Naive thymus-derived CD8-positive, alpha-beta T cell (primary cell): ENCODE measurements at regions of chr1 and their contacts with region 1.

Region 1: GRCh38 chr1:147242439-147243227 is at the start of gene CHD1L:
- DNase-seq: peak; percentile 87 to 95 (median 93)
- ATAC-seq: peak; percentile 88 to 90
- H3K4me3 Mint-ChIP-seq: peak within 1 kb of the TSS; percentile 91 to 99 (median 95)
- H3K27ac Mint-ChIP-seq: peak within 1 kb of the TSS; percentile 61 to 95 (median 86)
- H3K4me1 Mint-ChIP-seq: peaks cover 21 to 44% (median 38%) of the 10 kb centered on the region in 4 donors
- H3K27me3 Mint-ChIP-seq: peaks cover 0 to 5% (median 3%) of the 10 kb centered on the region in 5 donors
- polyA plus RNA-seq, gene CHD1L: 17.6 to 25.5 (median 21.9) TPM

Region 2: GRCh38 chr1:147084273-147085096 is 158.1 kb before region 1 on chr1:
- POLR2A ChIA-PET with region 1: interaction called, 10 read pairs
- DNase-seq: peak; percentile 27 to 81 (median 62)
- ATAC-seq: peak; percentile 75 to 81
- H3K4me3 Mint-ChIP-seq: peak overlapping the region; percentile 86 to 99 (median 95)
- H3K27ac Mint-ChIP-seq: peak overlapping the region; percentile 91 to 100 (median 96)
- H3K4me1 Mint-ChIP-seq: peaks cover 19 to 39% (median 31%) of the 10 kb centered on the region in 4 donors
- H3K27me3 Mint-ChIP-seq: peaks cover 13 to 71% (median 53%) of the 10 kb centered on the region in 5 donors

Region 3: DNA sequence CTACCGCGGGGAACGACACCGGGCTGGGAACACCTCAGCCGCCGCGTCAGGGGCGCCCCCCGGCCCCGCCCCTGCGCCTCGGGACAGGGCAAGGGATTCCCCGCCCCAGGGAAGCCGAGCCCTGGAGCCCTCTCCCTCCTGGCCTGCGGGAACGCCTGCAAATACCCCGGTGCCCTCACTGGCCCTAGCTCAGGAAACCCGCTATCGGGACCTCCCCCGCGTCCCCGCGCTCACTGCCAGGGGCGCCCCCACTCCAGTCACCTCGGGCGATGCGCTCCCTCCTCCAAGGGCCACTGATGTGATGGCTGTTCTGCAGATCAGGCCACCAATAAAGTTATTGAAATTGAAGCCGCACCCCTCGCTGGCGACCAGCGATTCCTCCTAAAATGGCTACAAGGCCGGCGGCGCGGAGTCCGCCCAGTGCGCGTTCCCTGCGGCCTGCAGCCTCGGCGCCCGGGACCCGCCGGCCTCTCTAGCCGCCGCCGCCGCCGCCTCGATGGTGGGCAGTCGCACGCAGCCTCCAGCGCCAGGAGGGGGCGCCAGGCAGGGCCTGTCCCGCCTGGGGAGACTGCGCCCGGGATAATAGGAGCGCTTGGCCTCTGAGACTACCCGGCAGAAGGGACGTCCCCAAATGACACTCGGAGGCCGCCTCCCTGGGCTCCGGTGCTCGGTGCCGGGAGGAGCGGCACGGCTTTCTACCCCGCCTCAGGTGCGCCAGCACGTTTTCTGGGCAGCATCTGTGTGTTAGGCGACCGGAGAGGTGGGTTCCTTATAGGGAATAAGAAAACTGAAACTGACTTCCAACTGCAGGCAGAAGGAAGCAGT is 70.3 kb before region 1 on chr1 and contains the start of gene PRKAB2:
- POLR2A ChIA-PET with region 1: interaction called, 28 read pairs
- DNase-seq: peak; percentile 74 to 90 (median 86)
- ATAC-seq: peak; percentile 77 to 80
- H3K4me3 Mint-ChIP-seq: peak within 1 kb of the TSS; percentile 97 to 99 (median 98)
- H3K27ac Mint-ChIP-seq: peak within 1 kb of the TSS; percentile 91 to 98 (median 96)
- H3K4me1 Mint-ChIP-seq: peaks cover 16 to 45% (median 43%) of the 10 kb centered on the region in 4 donors
- H3K27me3 Mint-ChIP-seq: peaks cover 0 to 2% (median 0%) of the 10 kb centered on the region in 5 donors
- polyA plus RNA-seq, gene PRKAB2: 2.3 to 4.3 (median 2.4) TPM

Region 4: GRCh38 chr1:147264158-147264768 is 21.6 kb after region 1 on chr1:
- POLR2A ChIA-PET with region 1: no interaction called
- DNase-seq: no peak
- ATAC-seq: no peak
- H3K4me3 Mint-ChIP-seq: no peak overlapping the region
- H3K27ac Mint-ChIP-seq: no peak overlapping the region
- H3K4me1 Mint-ChIP-seq: no peaks in the 10 kb centered on the region
- H3K27me3 Mint-ChIP-seq: no peaks in the 10 kb centered on the region